GM13976 (cell line): ENCODE measurements at regions of chr20 and their contacts with region 1.

Region 1: GRCh38 chr20:48620519-48621254 is 207.1 kb downstream of the PREX1 start:
- DNase-seq: peak; percentile 91
- CTCF ChIP-seq: peak; percentile 93

Region 2: GRCh38 chr20:47677635-47678453 is 942.8 kb before region 1 on chr20:
- in situ Hi-C with region 1: loop called (anchors 25 kb)
- DNase-seq: peak; percentile 88
- CTCF ChIP-seq: peak; percentile 84

Region 3: DNA sequence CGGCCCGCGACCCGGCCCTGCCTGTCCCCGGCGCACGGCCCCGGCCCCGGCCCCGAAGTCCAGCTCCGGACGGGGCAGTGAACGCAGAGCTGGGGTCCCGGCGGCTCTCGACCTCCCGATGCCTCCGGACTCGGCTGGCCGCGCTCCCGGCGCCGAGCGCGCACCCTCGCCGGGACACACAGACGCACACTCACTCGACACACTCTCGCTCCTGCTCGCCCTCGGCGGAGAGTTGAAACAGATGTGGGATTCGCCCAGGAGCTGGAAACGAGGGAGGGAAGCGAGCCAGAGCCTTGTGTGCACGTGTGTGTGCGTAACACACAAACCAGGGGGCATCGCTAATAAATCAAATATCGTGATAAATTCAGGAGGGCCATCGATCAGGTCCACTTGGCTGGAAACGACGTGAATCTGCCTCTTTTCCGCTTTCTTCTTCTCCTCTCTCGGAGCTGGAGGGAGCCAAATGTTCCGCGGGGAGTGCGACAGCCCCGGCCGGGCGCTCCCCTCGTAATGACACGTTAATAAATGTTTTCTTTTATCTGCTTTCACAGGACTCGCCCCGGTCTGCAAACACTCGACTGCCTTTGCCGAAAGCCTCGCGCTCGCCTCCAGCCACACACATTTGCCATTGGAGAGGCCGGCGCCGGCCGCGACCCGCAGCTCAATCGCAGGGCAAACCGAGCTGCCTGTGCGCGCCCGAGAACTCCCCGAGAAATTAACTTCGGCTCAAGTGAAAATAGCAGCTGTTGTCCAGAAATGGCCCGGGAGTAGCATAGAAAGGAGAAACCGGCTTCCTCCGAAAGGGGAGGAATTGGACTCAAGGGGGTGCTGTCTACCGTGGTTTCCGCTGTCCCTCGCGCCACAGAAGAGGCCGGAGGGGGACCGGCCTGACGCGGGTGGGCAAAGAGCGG is 834.6 kb before region 1 on chr20:
- in situ Hi-C with region 1: loop called (anchors 10 kb)
- DNase-seq: peak; percentile 84
- CTCF ChIP-seq: peak; percentile 59

Region 4: GRCh38 chr20:48489656-48490055 is 131.0 kb before region 1 on chr20:
- in situ Hi-C with region 1: no loop called
- DNase-seq: peak; percentile 37
- CTCF ChIP-seq: no peak